GM12878 (cell line): ENCODE measurements at regions of chr1 and their contacts with region 1.

Region 1: GRCh38 chr1:234699795-234700665 is 90.1 kb upstream of the IRF2BP2 start:
- DNase-seq: peak; percentile 83
- ATAC-seq: peak; percentile 89
- H3K4me3 ChIP-seq: no peak overlapping the region
- H3K27ac ChIP-seq: peak overlapping the region; percentile 43
- H3K4me1 ChIP-seq: peaks cover 32% of the 10 kb centered on the region
- H3K27me3 ChIP-seq: no peaks in the 10 kb centered on the region
- CTCF ChIP-seq: no peak
- EP300 ChIP-seq: peak; percentile 95 to 96
- POLR2A ChIP-seq: 0 out of 2 replicates have a peak, but pooled peaks have one; percentile 23
- RAD21 ChIP-seq: 0 out of 2 replicates have a peak, but pooled peaks have one; percentile 28

Region 2: GRCh38 chr1:234684856-234685255 is 15.2 kb before region 1 on chr1:
- CTCF ChIA-PET with region 1: no interaction called
- POLR2A ChIA-PET with region 1: no interaction called
- RAD21 ChIA-PET with region 1: no interaction called
- SMC1A ChIA-PET with region 1: no interaction called
- in situ Hi-C with region 1: no loop called
- intact Hi-C with region 1: no loop called
- DNase-seq: no peak
- ATAC-seq: no peak
- H3K4me3 ChIP-seq: no peak overlapping the region
- H3K27ac ChIP-seq: no peak overlapping the region
- H3K4me1 ChIP-seq: no peaks in the 10 kb centered on the region
- H3K27me3 ChIP-seq: no peaks in the 10 kb centered on the region
- CTCF ChIP-seq: no peak
- EP300 ChIP-seq: no peak
- POLR2A ChIP-seq: no peak
- RAD21 ChIP-seq: no peak

Region 3: GRCh38 chr1:234716908-234717375 is 16.9 kb after region 1 on chr1:
- CTCF ChIA-PET with region 1: interaction called, 15 read pairs
- POLR2A ChIA-PET with region 1: interaction called, 9 read pairs
- RAD21 ChIA-PET with region 1: interaction called, 98 read pairs
- SMC1A ChIA-PET with region 1: interaction called, 255 read pairs
- in situ Hi-C with region 1: no loop called
- intact Hi-C with region 1: no loop called
- DNase-seq: no peak
- ATAC-seq: no peak
- H3K4me3 ChIP-seq: no peak overlapping the region
- H3K27ac ChIP-seq: no peak overlapping the region
- H3K4me1 ChIP-seq: no peaks in the 10 kb centered on the region; the same call in 1 of the 2 replicates
- H3K27me3 ChIP-seq: no peaks in the 10 kb centered on the region
- CTCF ChIP-seq: no peak
- EP300 ChIP-seq: no peak
- POLR2A ChIP-seq: no peak
- RAD21 ChIP-seq: no peak

Region 4: DNA sequence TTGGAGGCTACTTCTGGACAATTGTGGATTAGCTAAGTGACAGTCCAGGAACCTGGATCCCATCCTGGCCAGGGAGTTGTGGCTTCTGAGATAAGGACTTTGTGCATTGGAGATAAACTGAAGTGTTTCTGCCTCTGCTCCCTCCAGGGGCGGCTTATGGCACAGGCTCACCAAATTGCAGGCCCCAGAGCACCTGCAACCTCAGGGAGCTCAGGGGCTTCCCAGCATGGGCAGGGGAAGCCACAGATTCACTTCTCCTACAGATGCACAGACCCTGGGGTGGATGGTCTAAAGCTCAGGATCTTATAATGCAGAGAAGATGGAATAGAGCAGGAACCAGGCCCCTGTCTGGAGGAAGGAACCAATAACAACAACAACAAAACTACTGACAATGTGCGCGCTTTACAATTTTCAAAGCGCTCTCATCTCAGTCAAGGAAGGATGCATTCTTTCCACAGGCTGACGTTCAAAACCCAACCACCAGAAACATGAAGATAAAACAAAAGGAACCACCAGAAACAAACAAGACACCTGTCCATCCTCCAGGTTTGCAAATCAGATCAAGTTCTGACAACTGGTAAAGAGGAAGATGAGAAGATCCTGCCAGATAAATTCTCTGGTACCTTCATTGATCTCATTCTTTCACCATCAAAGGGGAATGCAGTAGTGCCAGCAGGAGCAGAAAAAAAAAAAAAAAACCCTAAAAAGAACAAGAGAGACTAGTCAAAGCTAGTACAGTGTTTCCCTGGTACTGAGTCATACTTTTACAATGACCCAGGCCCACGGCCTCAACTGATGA is 30.9 kb after region 1 on chr1:
- CTCF ChIA-PET with region 1: interaction called, 5 read pairs
- POLR2A ChIA-PET with region 1: interaction called, 4 read pairs
- RAD21 ChIA-PET with region 1: interaction called, 98 read pairs
- SMC1A ChIA-PET with region 1: interaction called, 255 read pairs
- in situ Hi-C with region 1: no loop called
- intact Hi-C with region 1: loop called (anchors 2 kb)
- DNase-seq: peak; percentile 68
- ATAC-seq: peak; percentile 80
- H3K4me3 ChIP-seq: peak overlapping the region; percentile 17; the same call in 1 of the 2 replicates
- H3K27ac ChIP-seq: peak overlapping the region; percentile 82
- H3K4me1 ChIP-seq: peaks cover 59% of the 10 kb centered on the region
- H3K27me3 ChIP-seq: no peaks in the 10 kb centered on the region
- CTCF ChIP-seq: peak; percentile 17 to 30 (median 28); a peak in 3 of 6 replicates
- EP300 ChIP-seq: peak; percentile 53 to 57; a peak in 3 of 4 replicates
- POLR2A ChIP-seq: no peak
- RAD21 ChIP-seq: peak; percentile 46; the same call in 1 of the 2 replicates